Activated naive CD4-positive, alpha-beta T cell treated with anti-CD3 and anti-CD28 coated beads for 36 hours (primary cell): ENCODE measurements at regions of chr13 and their contacts with region 1.

Region 1: GRCh38 chr13:109786457-109787134 is at the start of gene IRS2:
- DNase-seq: peak; percentile 94
- H3K4me3 Mint-ChIP-seq: peak within 1 kb of the TSS; percentile 77
- H3K27ac Mint-ChIP-seq: peak within 1 kb of the TSS; percentile 61
- H3K4me1 Mint-ChIP-seq: peaks cover 19% of the 10 kb centered on the region
- H3K27me3 Mint-ChIP-seq: peaks cover 5% of the 10 kb centered on the region
- total RNA-seq, gene IRS2: 3.0 to 3.3 TPM

Region 2: GRCh38 chr13:108322206-108322824 is 1464.3 kb before region 1 on chr13:
- CTCF ChIA-PET with region 1: no interaction called
- intact Hi-C with region 1: loop called (anchors 10 kb)
- DNase-seq: no peak
- H3K4me3 Mint-ChIP-seq: no peak overlapping the region
- H3K27ac Mint-ChIP-seq: no peak overlapping the region
- H3K4me1 Mint-ChIP-seq: peaks cover 21% of the 10 kb centered on the region
- H3K27me3 Mint-ChIP-seq: no peaks in the 10 kb centered on the region

Region 3: GRCh38 chr13:109145631-109146030 is 641.0 kb before region 1 on chr13:
- CTCF ChIA-PET with region 1: no interaction called
- intact Hi-C with region 1: loop called (anchors 1 kb)
- DNase-seq: peak; percentile 41
- H3K4me3 Mint-ChIP-seq: no peak overlapping the region
- H3K27ac Mint-ChIP-seq: no peak overlapping the region
- H3K4me1 Mint-ChIP-seq: no peaks in the 10 kb centered on the region
- H3K27me3 Mint-ChIP-seq: peaks cover 35% of the 10 kb centered on the region

Region 4: DNA sequence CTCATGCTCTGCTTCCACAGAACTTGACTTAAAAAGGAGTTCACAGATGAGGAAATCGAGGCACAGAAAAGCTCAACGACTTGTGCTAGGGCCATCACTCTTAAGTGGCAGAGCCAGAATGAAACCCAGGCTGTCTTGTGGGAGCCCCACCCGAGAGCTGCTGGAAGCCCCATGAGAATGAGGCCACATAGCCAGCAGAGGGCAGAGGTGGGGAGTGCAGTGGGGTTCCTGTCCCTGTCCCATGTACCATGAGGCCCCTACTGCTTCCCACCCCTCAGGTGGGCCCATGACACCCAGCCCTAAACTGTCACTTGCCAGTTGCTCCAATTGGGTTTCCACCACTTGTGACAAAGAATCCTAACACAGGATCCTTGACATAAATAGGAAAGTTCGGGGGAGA is 176.1 kb before region 1 on chr13:
- CTCF ChIA-PET with region 1: interaction called, 3 read pairs
- intact Hi-C with region 1: loop called (anchors 1 kb)
- DNase-seq: peak; percentile 51
- H3K4me3 Mint-ChIP-seq: no peak overlapping the region
- H3K27ac Mint-ChIP-seq: no peak overlapping the region
- H3K4me1 Mint-ChIP-seq: peaks cover 2% of the 10 kb centered on the region
- H3K27me3 Mint-ChIP-seq: no peaks in the 10 kb centered on the region

Region 5: DNA sequence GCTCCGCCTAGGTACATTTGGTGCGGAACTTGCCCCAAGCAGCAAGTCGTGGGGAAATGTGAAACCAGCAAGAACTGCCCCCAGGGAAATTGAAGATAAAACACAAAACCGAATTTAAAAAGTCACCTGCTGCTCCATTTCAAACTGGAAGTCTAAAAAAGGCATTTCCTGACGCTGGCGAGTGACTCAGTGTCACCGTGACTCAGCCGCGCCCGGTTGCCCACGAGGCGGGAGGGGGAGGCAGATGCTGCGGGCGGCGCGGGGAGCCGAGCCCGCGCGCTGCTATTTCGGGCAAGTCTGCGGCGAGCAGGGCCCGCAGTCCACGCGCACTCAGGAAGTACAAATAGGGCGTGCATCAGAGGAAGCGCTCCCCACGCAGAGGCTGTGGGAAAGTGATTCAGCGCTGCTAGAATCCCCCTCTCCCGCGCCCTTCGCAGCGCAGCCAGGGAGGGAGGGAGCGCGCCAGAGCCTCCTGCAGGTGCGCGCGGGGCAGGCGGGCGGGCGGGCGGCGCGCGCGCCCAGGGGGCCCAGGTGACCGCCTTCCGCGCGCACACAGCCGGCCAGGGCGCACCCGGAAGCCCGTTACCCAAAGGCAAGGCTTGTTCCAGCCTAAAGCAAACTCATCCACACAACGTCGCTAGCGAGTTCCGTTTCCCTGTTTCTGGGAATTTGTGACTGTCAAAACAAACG is 351.6 kb after region 1 on chr13:
- CTCF ChIA-PET with region 1: no interaction called
- intact Hi-C with region 1: loop called (anchors 1 kb)
- DNase-seq: peak; percentile 85
- H3K4me3 Mint-ChIP-seq: peak overlapping the region; percentile 73
- H3K27ac Mint-ChIP-seq: peak overlapping the region; percentile 59
- H3K4me1 Mint-ChIP-seq: peaks cover 9% of the 10 kb centered on the region
- H3K27me3 Mint-ChIP-seq: peaks cover 41% of the 10 kb centered on the region

Region 6: DNA sequence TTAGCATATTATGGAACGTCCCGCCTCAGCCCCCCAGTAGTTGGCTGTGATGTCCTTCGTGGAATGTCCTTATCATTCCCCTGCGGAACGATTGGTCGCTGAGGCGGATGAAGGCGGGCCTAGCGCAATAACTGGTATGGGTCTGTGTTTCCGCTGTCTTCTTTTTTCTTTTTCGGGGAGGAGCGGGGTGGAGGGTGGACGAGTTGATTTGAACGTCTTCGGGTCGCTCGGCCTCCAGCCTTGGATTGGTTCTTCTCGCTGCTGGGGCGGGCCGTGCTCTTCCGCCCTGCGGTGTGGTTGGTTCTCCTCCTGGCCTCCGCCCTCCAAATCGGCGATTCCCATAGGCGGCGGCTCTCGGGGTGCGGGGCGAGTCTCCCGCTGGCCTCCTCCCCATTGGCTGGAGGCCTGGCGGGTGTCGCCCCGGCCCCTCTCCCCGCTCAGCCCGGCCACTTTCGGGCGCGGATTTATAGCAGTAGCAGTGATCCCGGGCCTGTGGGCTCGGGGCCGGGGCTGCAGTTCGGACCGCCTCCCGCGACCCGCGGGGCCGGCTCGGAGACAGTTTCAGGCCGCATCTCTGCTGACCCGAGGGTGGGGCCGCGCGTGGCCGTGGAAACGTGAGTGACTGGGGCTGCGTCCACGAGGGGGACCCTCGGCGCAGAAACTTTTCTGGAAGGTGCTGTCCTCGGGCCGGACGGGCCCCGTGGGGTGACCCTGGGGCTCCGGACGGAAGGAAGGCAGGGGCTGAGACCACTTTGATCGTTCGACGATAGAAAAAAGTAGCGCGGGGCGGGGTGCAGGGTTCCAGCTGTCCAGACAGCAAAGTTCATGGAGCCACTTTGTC is 929.0 kb after region 1 on chr13:
- CTCF ChIA-PET with region 1: no interaction called
- intact Hi-C with region 1: loop called (anchors 2 kb)
- DNase-seq: peak; percentile 98
- H3K4me3 Mint-ChIP-seq: peak overlapping the region; percentile 93
- H3K27ac Mint-ChIP-seq: peak overlapping the region; percentile 96
- H3K4me1 Mint-ChIP-seq: peaks cover 31% of the 10 kb centered on the region
- H3K27me3 Mint-ChIP-seq: no peaks in the 10 kb centered on the region